ENCODE measurements at regions of chr1 and their contacts with region 1.

Region 1: GRCh38 chr1:28591708-28592320 is at the start of gene RAB42:
- DNase-seq: peak in 4 of 5 donors; percentile 27 to 56 (median 37)
- H3K4me3 ChIP-seq: peak within 1 kb of the TSS; percentile 38
- H3K27ac ChIP-seq: no peak within 1 kb of the TSS
- H3K4me1 ChIP-seq: peaks cover 2% of the 10 kb centered on the region
- H3K27me3 ChIP-seq: no peaks in the 10 kb centered on the region
- CTCF ChIP-seq: no peak
- EP300 ChIP-seq: no peak
- POLR2A ChIP-seq: no peak
- total RNA-seq, gene RAB42: 0.36 to 4.2 (median 0.89) TPM in 6 of 7 donors, not detected in the other

Region 2: DNA sequence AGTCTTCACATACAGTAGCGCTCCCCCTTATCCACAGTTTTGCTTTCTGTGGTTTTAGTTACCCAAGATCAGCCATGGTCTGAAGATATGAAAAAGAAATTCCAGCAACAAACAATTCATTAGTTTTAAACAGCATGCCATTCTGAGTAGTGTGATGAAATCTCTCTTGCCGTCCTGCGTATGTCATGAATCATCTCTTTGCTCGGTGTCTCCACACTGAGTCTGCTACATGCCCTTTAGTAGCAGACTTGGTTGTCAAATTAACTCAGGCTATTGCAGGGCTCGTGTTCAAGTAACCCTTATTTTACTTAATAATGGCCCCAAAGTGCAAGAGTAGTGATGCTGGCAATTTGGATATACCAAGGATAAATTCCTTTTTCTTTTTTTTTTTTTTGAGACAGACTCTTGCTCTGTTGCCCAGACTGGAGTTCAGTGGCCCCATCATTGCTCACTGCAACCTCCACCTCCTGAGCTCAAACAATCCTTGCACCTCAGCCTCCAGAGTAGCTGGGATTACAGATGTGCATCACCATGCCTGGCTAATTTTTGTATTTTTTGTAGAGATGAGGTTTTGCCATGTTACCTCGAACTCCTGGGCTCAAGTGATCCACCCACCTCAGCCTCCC is 199.7 kb before region 1 on chr1:
- intact Hi-C with region 1: no loop called
- DNase-seq: no peak
- H3K4me3 ChIP-seq: no peak overlapping the region
- H3K27ac ChIP-seq: no peak overlapping the region
- H3K4me1 ChIP-seq: peaks cover 4% of the 10 kb centered on the region
- H3K27me3 ChIP-seq: no peaks in the 10 kb centered on the region
- CTCF ChIP-seq: no peak
- EP300 ChIP-seq: no peak
- POLR2A ChIP-seq: no peak

Region 3: GRCh38 chr1:28526889-28527288 is 64.9 kb before region 1 on chr1:
- intact Hi-C with region 1: loop called in 1 of 4 experiments (anchors 10 kb)
- DNase-seq: no peak
- H3K4me3 ChIP-seq: no peak overlapping the region
- H3K27ac ChIP-seq: no peak overlapping the region
- H3K4me1 ChIP-seq: no peaks in the 10 kb centered on the region
- H3K27me3 ChIP-seq: no peaks in the 10 kb centered on the region
- CTCF ChIP-seq: no peak
- EP300 ChIP-seq: no peak
- POLR2A ChIP-seq: no peak